Breast epithelium (tissue), 4 donors: ENCODE measurements at regions of chr17 and their contacts with region 1.

Region 1: DNA sequence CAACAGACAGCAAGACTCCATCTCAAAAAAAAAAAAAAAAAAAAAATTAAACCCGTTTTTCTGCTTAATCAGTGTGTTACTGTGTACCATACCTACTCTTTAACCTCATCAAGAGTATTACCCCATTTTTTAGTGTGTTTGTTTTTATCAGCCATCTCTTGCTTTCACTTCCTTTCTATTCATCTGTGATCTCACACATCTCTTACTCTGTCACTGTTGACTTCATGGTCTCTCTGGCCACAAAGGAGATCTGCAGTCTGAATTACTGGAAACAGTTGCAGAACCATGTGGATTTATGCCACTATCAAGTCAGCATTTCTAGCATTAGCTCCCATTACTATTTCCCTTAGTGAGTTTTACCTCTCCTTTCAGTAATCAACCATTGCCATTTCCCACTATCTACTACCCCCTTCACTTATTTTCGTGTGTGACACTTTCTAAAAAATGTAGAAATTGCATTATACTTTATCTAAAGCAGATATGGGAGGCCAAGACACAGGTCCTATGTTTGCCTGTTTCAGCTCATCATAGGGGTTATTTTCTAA is 20.1 kb downstream of the NDEL1 start:
- DNase-seq: no peak
- H3K4me3 ChIP-seq: no peak overlapping the region
- H3K27ac ChIP-seq: no peak overlapping the region
- H3K4me1 ChIP-seq: no peaks in the 10 kb centered on the region
- H3K27me3 ChIP-seq: no peaks in the 10 kb centered on the region
- CTCF ChIP-seq: no peak
- POLR2A ChIP-seq: no peak

Region 2: DNA sequence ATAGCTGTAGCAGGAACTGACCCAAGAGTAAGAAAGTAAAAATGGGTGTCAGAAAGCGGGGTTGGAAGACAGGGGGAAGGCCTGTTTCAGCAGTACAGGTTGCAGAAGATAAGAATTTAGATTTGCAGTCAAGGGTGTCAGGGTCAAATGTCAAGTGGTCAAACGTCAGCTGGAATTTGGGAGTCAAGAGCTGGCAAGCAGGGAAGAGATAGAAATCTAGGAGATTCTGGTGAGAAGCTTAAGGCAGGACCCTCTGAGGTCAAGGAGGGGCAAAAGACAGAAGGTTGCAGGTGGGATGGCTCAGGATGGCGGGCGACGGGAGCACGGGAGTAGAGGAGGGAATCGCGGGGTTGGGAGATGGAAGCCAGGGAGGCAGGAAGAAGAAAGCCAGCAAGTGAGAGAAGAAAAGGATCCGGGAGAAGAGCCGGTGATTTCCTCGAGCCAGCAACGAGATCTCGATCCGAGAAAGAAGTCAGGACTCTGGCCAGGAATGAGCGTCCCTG is 160.9 kb before region 1 on chr17:
- intact Hi-C with region 1: loop called (anchors 5 kb)
- DNase-seq: no peak
- H3K4me3 ChIP-seq: peak overlapping the region; percentile 57 to 80 (median 70)
- H3K27ac ChIP-seq: peak overlapping the region; percentile 88 to 92
- H3K4me1 ChIP-seq: no peaks in the 10 kb centered on the region
- H3K27me3 ChIP-seq: no peaks in the 10 kb centered on the region
- CTCF ChIP-seq: no peak
- POLR2A ChIP-seq: no peak